BJ (cell line): ENCODE measurements at regions of chr11 and their contacts with region 1.

Region 1: GRCh38 chr11:72483412-72484186 is 49.3 kb upstream of the CLPB start:
- DNase-seq: no peak
- H3K4me3 ChIP-seq: no peak overlapping the region
- H3K27me3 ChIP-seq: peaks cover 4% of the 10 kb centered on the region
- CTCF ChIP-seq: no peak

Region 2: GRCh38 chr11:72418834-72419562 is 64.6 kb before region 1 on chr11:
- CTCF ChIA-PET with region 1: no interaction called
- POLR2A ChIA-PET with region 1: no interaction called
- DNase-seq: no peak
- H3K4me3 ChIP-seq: no peak overlapping the region
- H3K27me3 ChIP-seq: no peaks in the 10 kb centered on the region
- CTCF ChIP-seq: no peak

Region 3: GRCh38 chr11:72573072-72573854 is 89.7 kb after region 1 on chr11:
- CTCF ChIA-PET with region 1: interaction called, 31 read pairs
- POLR2A ChIA-PET with region 1: no interaction called
- DNase-seq: no peak
- H3K4me3 ChIP-seq: no peak overlapping the region
- H3K27me3 ChIP-seq: peaks cover 2% of the 10 kb centered on the region; the same call in 1 of the 2 replicates
- CTCF ChIP-seq: peak; percentile 72